ENCODE measurements at regions of chr2 and their contacts with region 1.

Region 1: GRCh38 chr2:236180831-236181453 is 12.8 kb upstream of the GBX2 start:
- DNase-seq: peak; percentile 78
- ATAC-seq: peak; percentile 11; the same call in 1 of the 2 replicates
- H3K4me3 Mint-ChIP-seq: no peak overlapping the region
- H3K27ac Mint-ChIP-seq: no peak overlapping the region
- H3K4me1 Mint-ChIP-seq: peaks cover 23% of the 10 kb centered on the region
- H3K27me3 Mint-ChIP-seq: peaks cover 40% of the 10 kb centered on the region
- CTCF ChIP-seq: peak; percentile 78

Region 2: DNA sequence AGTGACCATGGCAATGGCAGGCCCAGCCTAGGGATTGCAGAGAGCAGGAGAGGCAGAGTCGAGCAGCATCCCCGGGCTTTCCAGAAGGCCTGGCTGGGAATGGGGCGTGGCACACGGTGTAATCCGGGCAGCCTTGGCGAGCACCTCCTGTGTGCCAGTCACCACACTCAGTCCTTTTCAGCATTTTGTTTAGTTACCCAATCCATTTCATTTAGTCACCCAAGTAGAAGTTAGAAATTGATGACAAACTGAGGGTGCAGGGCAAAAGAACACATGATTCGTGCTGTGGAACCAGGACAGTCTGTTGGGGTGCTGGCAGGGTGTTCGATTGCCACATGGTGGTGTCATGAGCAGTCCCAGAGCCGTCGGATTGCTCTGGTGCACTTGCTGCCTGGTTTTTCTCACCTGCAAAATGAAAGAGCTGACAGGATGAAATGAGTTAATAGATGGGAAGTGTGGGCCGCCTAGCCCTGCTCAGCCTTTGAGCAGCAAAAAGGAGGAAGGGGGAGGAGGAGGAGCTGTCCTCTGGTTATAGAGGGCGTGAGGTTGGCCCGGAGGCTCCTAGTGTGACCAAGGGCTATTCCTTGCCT is 387.7 kb before region 1 on chr2:
- CTCF ChIA-PET with region 1: interaction called, 12 read pairs
- POLR2A ChIA-PET with region 1: no interaction called
- DNase-seq: peak; percentile 60
- ATAC-seq: peak; percentile 93
- H3K4me3 Mint-ChIP-seq: no peak overlapping the region
- H3K27ac Mint-ChIP-seq: no peak overlapping the region
- H3K4me1 Mint-ChIP-seq: peaks cover 22% of the 10 kb centered on the region
- H3K27me3 Mint-ChIP-seq: no peaks in the 10 kb centered on the region
- CTCF ChIP-seq: peak; percentile 30

Region 3: GRCh38 chr2:235951982-235952381 is 229.0 kb before region 1 on chr2:
- CTCF ChIA-PET with region 1: interaction called, 16 read pairs
- POLR2A ChIA-PET with region 1: no interaction called
- DNase-seq: no peak
- ATAC-seq: no peak
- H3K4me3 Mint-ChIP-seq: no peak overlapping the region
- H3K27ac Mint-ChIP-seq: no peak overlapping the region
- H3K4me1 Mint-ChIP-seq: peaks cover 40% of the 10 kb centered on the region
- H3K27me3 Mint-ChIP-seq: no peaks in the 10 kb centered on the region
- CTCF ChIP-seq: no peak

Region 4: DNA sequence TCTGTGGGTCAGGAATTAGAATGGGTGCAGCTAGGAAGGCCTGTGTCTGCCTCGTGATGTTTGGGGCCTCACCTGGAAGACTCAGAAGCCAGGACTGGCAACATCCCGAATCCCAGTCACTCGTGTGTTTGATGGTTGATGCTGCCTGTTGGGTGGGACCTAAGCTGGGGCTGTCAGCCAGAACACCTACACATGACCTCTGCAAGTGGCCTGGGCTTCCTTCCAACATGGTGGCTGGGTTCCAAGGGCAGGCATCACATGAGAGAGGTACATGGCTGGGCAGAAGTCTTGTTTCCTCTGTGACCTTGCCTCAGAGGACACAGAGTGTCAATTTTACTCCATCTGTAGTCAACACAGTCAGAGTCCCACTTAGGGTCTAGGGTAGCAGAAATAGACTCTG is 190.6 kb before region 1 on chr2:
- CTCF ChIA-PET with region 1: interaction called, 14 read pairs
- POLR2A ChIA-PET with region 1: no interaction called
- DNase-seq: no peak
- ATAC-seq: no peak
- H3K4me3 Mint-ChIP-seq: no peak overlapping the region
- H3K27ac Mint-ChIP-seq: no peak overlapping the region
- H3K4me1 Mint-ChIP-seq: peaks cover 34% of the 10 kb centered on the region
- H3K27me3 Mint-ChIP-seq: no peaks in the 10 kb centered on the region
- CTCF ChIP-seq: no peak

Region 5: GRCh38 chr2:236143811-236144210 is 37.1 kb before region 1 on chr2:
- CTCF ChIA-PET with region 1: interaction called, 14 read pairs
- POLR2A ChIA-PET with region 1: no interaction called
- DNase-seq: no peak
- ATAC-seq: no peak
- H3K4me3 Mint-ChIP-seq: no peak overlapping the region
- H3K27ac Mint-ChIP-seq: no peak overlapping the region
- H3K4me1 Mint-ChIP-seq: peaks cover 13% of the 10 kb centered on the region
- H3K27me3 Mint-ChIP-seq: peaks cover 6% of the 10 kb centered on the region
- CTCF ChIP-seq: no peak

Region 6: DNA sequence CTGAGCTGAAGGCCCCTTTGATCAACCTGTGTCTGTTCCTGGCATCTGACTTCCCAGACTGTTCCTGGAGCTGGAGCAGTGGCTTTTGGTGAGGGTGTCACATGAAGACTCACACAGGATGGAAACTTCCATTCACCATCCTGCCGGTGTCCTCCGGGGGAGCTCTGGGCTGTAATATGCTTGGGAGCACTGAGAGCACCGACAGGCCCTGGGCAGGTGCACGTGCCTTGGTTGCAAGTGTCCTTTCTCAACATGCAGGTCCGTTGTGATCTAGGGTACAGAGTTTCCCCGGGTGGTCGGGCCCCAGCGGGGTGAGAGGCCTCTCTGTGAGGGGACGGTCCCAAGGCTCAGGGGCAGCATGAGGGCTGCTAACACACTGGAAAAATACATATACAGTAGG is 12.1 kb after region 1 on chr2:
- CTCF ChIA-PET with region 1: interaction called, 13 read pairs
- POLR2A ChIA-PET with region 1: no interaction called
- DNase-seq: no peak
- ATAC-seq: peak; percentile 83
- H3K4me3 Mint-ChIP-seq: no peak overlapping the region
- H3K27ac Mint-ChIP-seq: no peak overlapping the region; the same call in 1 of the 2 replicates
- H3K4me1 Mint-ChIP-seq: peaks cover 8% of the 10 kb centered on the region; the same call in 1 of the 2 replicates
- H3K27me3 Mint-ChIP-seq: no peaks in the 10 kb centered on the region
- CTCF ChIP-seq: no peak